ENCODE measurements at regions of chr20 and their contacts with region 1.

Region 1: GRCh38 chr20:56554869-56555268 is 21.8 kb downstream of the FAM209B start:
- DNase-seq: peak; percentile 63
- H3K4me3 ChIP-seq: peak overlapping the region; percentile 15
- H3K27ac ChIP-seq: peak overlapping the region; percentile 32
- H3K4me1 ChIP-seq: peaks cover 32% of the 10 kb centered on the region
- CTCF ChIP-seq: no peak

Region 2: GRCh38 chr20:56574531-56575142 is 19.8 kb after region 1 on chr20:
- CTCF ChIA-PET with region 1: interaction called, 3 read pairs
- POLR2A ChIA-PET with region 1: no interaction called
- intact Hi-C with region 1: loop called (anchors 1 kb)
- DNase-seq: no peak
- H3K4me3 ChIP-seq: no peak overlapping the region
- H3K27ac ChIP-seq: no peak overlapping the region
- H3K4me1 ChIP-seq: no peaks in the 10 kb centered on the region
- CTCF ChIP-seq: no peak

Region 3: GRCh38 chr20:56765162-56766073 is 210.5 kb after region 1 on chr20:
- CTCF ChIA-PET with region 1: no interaction called
- POLR2A ChIA-PET with region 1: no interaction called
- intact Hi-C with region 1: no loop called
- DNase-seq: no peak
- H3K4me3 ChIP-seq: no peak overlapping the region
- H3K27ac ChIP-seq: no peak overlapping the region
- H3K4me1 ChIP-seq: no peaks in the 10 kb centered on the region
- CTCF ChIP-seq: no peak

Region 4: GRCh38 chr20:56995576-56996075 is 440.8 kb after region 1 on chr20:
- CTCF ChIA-PET with region 1: interaction called, 3 read pairs
- POLR2A ChIA-PET with region 1: no interaction called
- intact Hi-C with region 1: loop called (anchors 5 kb)
- DNase-seq: peak; percentile 58
- H3K4me3 ChIP-seq: no peak overlapping the region
- H3K27ac ChIP-seq: no peak overlapping the region
- H3K4me1 ChIP-seq: no peaks in the 10 kb centered on the region
- CTCF ChIP-seq: peak; percentile 88